PC-3 (cell line): ENCODE measurements at regions of chr7 and their contacts with region 1.

Region 1: DNA sequence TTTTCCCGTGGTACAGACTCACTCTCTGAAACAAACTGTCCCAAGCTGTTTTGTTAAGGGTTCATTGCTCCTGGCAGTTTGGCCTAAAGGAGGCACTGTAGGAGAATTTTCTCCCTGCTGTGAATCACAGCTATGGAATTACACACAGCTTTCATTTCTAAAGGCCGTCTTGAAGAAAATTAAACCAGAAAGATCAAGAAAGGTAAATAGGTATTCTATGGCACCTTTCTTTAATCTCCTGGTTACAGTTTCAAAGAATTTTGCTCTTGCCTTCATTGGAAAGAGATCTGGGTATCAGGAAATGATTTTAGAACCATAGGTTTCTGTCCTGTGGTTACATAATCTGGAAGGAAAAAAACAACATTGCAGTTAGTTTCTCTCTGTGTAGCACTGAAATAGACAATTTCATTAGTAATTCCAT is 51.2 kb downstream of the PDK4 start:
- DNase-seq: peak; percentile 71
- ATAC-seq: peak; percentile 80
- H3K4me3 ChIP-seq: peak overlapping the region; percentile 64
- H3K27ac ChIP-seq: no peak overlapping the region
- H3K4me1 ChIP-seq: peaks cover 27% of the 10 kb centered on the region
- H3K27me3 ChIP-seq: peaks cover 17% of the 10 kb centered on the region
- CTCF ChIP-seq: peak; percentile 90

Region 2: GRCh38 chr7:95527033-95527775 is 17.9 kb before region 1 on chr7:
- CTCF ChIA-PET with region 1: interaction called, 9 read pairs
- POLR2A ChIA-PET with region 1: no interaction called
- intact Hi-C with region 1: loop called (anchors 1 kb)
- DNase-seq: peak; percentile 65
- ATAC-seq: peak; percentile 70
- H3K4me3 ChIP-seq: no peak overlapping the region
- H3K27ac ChIP-seq: no peak overlapping the region
- H3K4me1 ChIP-seq: 0 out of 2 replicates have a peak, but pooled peaks cover 4% of the 10 kb centered on the region
- H3K27me3 ChIP-seq: peaks cover 21% of the 10 kb centered on the region
- CTCF ChIP-seq: peak; percentile 95

Region 3: GRCh38 chr7:95596198-95597063 is 51.3 kb after region 1 on chr7 and contains the start of gene PDK4:
- CTCF ChIA-PET with region 1: interaction called, 3 read pairs
- POLR2A ChIA-PET with region 1: no interaction called
- intact Hi-C with region 1: loop called (anchors 2 kb)
- DNase-seq: peak; percentile 73
- ATAC-seq: peak; percentile 94
- H3K4me3 ChIP-seq: peak within 1 kb of the TSS; percentile 80
- H3K27ac ChIP-seq: no peak within 1 kb of the TSS
- H3K4me1 ChIP-seq: peaks cover 8% of the 10 kb centered on the region; the same call in 1 of the 2 replicates
- H3K27me3 ChIP-seq: no peaks in the 10 kb centered on the region
- CTCF ChIP-seq: no peak
- total RNA-seq, gene PDK4: 0.63 and 3.2 TPM in 2 replicates

Region 4: DNA sequence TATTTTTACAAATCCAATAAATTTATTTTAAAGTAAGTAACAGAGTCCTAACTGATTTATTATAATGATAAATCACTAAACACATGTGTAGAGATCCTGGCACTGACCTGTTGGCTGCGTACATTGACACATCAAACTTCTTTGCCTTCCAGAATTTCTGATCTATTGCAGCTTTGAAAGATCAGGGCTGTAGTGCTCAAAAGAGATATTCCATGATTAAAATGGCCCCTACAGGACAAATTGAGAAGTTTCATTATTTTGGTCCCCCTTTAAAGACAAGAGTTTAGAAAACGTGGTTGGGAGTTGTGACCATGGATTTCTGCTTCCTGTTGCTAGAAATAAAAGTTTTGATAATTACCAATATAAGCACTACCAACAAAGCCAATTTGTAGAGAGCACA is 138.9 kb after region 1 on chr7:
- CTCF ChIA-PET with region 1: interaction called, 52 read pairs
- POLR2A ChIA-PET with region 1: no interaction called
- intact Hi-C with region 1: loop called (anchors 1 kb)
- DNase-seq: peak; percentile 61
- ATAC-seq: peak; percentile 66
- H3K4me3 ChIP-seq: no peak overlapping the region
- H3K27ac ChIP-seq: no peak overlapping the region
- H3K4me1 ChIP-seq: 0 out of 2 replicates have a peak, but pooled peaks cover 5% of the 10 kb centered on the region
- H3K27me3 ChIP-seq: no peaks in the 10 kb centered on the region
- CTCF ChIP-seq: peak; percentile 63